ENCODE measurements at regions of chr1 and their contacts with region 1.

Region 1: DNA sequence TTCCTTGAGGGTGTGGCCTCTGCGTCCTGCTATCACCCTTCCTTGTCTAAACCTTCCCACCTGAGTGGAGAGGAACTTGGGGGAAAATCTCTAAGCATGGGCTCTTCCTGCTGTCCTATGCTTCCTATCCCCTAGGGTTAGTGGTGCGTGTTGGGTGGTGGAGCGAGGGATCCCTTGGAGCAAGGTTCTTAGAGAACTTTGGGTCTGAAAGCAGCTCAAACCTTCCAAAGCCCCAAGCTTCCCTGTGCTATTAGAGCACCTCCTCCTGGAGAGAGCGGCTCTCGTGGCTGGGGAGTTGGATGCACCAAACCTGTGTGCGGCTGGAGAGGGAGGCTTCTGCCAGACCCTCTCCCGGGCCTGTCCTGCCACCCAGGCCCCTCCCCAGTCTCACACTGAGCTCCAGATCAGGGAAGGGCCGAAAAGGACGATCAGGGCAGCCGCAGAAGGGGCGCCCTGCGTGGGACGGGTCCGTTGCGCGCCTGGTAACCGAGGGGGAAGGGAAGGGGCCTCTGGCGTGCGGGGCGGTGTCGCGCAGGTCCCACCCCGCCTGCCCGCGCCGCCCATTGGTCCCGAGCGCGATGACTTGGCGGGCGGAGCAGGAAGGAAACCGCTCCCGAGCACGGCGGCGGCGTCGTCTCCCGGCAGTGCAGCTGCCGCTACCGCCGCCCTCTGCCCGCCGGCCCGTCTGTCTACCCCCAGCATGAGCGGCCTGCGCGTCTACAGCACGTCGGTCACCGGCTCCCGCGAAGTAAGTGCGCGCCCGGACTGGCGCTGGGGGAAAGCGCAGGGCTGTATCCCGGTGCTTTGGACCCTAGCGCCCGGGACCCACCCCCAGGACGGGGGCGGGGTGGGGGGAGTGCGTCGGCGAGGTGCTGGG is at the start of gene SH3BGRL3:
- DNase-seq: peak; percentile 80 to 88 (median 85)
- H3K4me3 ChIP-seq: peak within 1 kb of the TSS; percentile 85
- H3K4me3 Mint-ChIP-seq: peak within 1 kb of the TSS; percentile 82 to 97 (median 93)
- H3K27ac ChIP-seq: peak within 1 kb of the TSS; percentile 86
- H3K27ac Mint-ChIP-seq: peak within 1 kb of the TSS; percentile 88 to 99 (median 96)
- H3K4me1 ChIP-seq: peaks cover 86% of the 10 kb centered on the region
- H3K4me1 Mint-ChIP-seq: peaks cover 78 to 87% (median 83%) of the 10 kb centered on the region in 3 donors
- H3K27me3 ChIP-seq: no peaks in the 10 kb centered on the region
- H3K27me3 Mint-ChIP-seq: no peaks in the 10 kb centered on the region
- total RNA-seq, gene SH3BGRL3: 447 to 472 TPM

Region 2: GRCh38 chr1:26161415-26162219 is 118.1 kb before region 1 on chr1:
- CTCF ChIA-PET with region 1: no interaction called
- POLR2A ChIA-PET with region 1: no interaction called
- DNase-seq: peak in 2 of 5 donors; percentile 35 to 57
- H3K4me3 ChIP-seq: peak overlapping the region; percentile 26
- H3K4me3 Mint-ChIP-seq: peak overlapping the region in 3 of 7 donors; percentile 43 to 62 (median 44)
- H3K27ac ChIP-seq: peak overlapping the region; percentile 16
- H3K27ac Mint-ChIP-seq: no peak overlapping the region
- H3K4me1 ChIP-seq: peaks cover 16% of the 10 kb centered on the region
- H3K4me1 Mint-ChIP-seq: peaks cover 11 to 23% (median 13%) of the 10 kb centered on the region in 3 donors
- H3K27me3 ChIP-seq: peaks cover 13% of the 10 kb centered on the region
- H3K27me3 Mint-ChIP-seq: peaks cover 43 to 46% of the 10 kb centered on the region in 2 donors

Region 3: GRCh38 chr1:26254404-26254803 is 25.3 kb before region 1 on chr1:
- CTCF ChIA-PET with region 1: no interaction called
- POLR2A ChIA-PET with region 1: no interaction called
- DNase-seq: no peak
- H3K4me3 ChIP-seq: no peak overlapping the region
- H3K4me3 Mint-ChIP-seq: no peak overlapping the region
- H3K27ac ChIP-seq: no peak overlapping the region
- H3K27ac Mint-ChIP-seq: peak overlapping the region in 1 of 8 donors; percentile 73
- H3K4me1 ChIP-seq: no peaks in the 10 kb centered on the region
- H3K4me1 Mint-ChIP-seq: peaks cover 0 to 7% (median 0%) of the 10 kb centered on the region in 3 donors
- H3K27me3 ChIP-seq: no peaks in the 10 kb centered on the region
- H3K27me3 Mint-ChIP-seq: no peaks in the 10 kb centered on the region

Region 4: GRCh38 chr1:26306290-26307229 is 26.9 kb after region 1 on chr1 and contains the start of gene UBXN11:
- CTCF ChIA-PET with region 1: interaction called, 840 read pairs
- POLR2A ChIA-PET with region 1: interaction called, 6 read pairs
- DNase-seq: peak; percentile 86 to 96 (median 92)
- H3K4me3 ChIP-seq: peak within 1 kb of the TSS; percentile 86
- H3K4me3 Mint-ChIP-seq: peak within 1 kb of the TSS; percentile 86 to 99 (median 97)
- H3K27ac ChIP-seq: peak within 1 kb of the TSS; percentile 77
- H3K27ac Mint-ChIP-seq: peak within 1 kb of the TSS; percentile 85 to 99 (median 98)
- H3K4me1 ChIP-seq: peaks cover 35% of the 10 kb centered on the region
- H3K4me1 Mint-ChIP-seq: peaks cover 26 to 29% (median 29%) of the 10 kb centered on the region in 3 donors
- H3K27me3 ChIP-seq: no peaks in the 10 kb centered on the region
- H3K27me3 Mint-ChIP-seq: no peaks in the 10 kb centered on the region
- total RNA-seq, gene UBXN11: 35.2 to 35.8 TPM

Region 5: DNA sequence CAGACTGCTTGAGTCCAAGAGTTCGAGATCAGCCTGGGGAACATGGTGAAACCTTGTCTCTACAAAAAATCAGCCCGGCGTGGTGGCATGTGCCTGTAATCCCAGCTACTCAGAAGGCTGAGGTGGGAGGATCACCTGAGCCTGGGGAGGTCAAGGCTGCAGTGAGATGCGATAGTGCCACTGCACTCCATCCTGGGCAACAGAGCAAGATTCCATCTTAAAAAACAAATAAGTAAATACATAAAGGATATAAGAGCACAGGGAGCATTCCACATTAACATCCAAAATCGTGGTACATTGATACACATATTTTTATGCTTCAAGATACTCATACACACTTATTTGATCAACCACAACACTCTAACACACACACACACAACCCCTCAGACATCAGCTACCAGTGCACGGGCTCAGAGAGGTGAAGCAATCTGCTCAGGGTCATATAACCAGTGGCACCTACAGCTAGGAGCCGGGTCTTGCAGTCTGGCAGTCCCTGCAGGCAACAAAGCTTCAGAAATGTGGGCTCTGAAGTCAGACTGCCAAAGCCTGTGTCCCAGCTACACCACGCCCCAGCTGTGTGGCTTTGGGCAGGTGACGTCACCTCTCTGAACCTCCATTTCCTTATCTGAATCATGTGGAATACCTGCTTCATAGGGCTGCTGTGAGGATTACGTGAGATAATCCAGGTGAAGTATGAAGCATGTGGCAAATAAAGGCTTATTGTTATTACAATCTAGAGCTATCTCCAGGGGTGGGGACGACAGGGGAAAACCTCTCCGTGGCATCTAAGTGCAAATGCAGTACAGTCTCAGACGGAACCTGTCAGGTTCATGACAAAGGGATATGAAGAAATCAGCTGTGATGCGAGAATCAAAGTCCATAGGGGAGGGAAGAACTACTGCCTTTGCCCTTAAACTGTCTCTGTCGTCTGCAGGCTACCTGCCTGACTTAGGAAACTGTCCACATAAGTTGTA is 79.0 kb after region 1 on chr1:
- CTCF ChIA-PET with region 1: interaction called, 24 read pairs
- POLR2A ChIA-PET with region 1: interaction called, 4 read pairs
- DNase-seq: peak; percentile 61 to 87 (median 75)
- H3K4me3 ChIP-seq: peak overlapping the region; percentile 23
- H3K4me3 Mint-ChIP-seq: peak overlapping the region; percentile 60 to 84 (median 69)
- H3K27ac ChIP-seq: no peak overlapping the region
- H3K27ac Mint-ChIP-seq: peak overlapping the region; percentile 61 to 91 (median 78)
- H3K4me1 ChIP-seq: peaks cover 36% of the 10 kb centered on the region
- H3K4me1 Mint-ChIP-seq: peaks cover 44 to 60% (median 47%) of the 10 kb centered on the region in 3 donors
- H3K27me3 ChIP-seq: peaks cover 14% of the 10 kb centered on the region
- H3K27me3 Mint-ChIP-seq: peaks cover 11 to 21% of the 10 kb centered on the region in 2 donors

Region 6: GRCh38 chr1:26363549-26364448 is 84.1 kb after region 1 on chr1:
- CTCF ChIA-PET with region 1: interaction called, 24 read pairs
- POLR2A ChIA-PET with region 1: interaction called, 4 read pairs
- DNase-seq: peak; percentile 75 to 87 (median 78)
- H3K4me3 ChIP-seq: no peak overlapping the region
- H3K4me3 Mint-ChIP-seq: peak overlapping the region in 5 of 7 donors; percentile 4 to 72 (median 61)
- H3K27ac ChIP-seq: no peak overlapping the region
- H3K27ac Mint-ChIP-seq: peak overlapping the region in 5 of 8 donors; percentile 18 to 59 (median 32)
- H3K4me1 ChIP-seq: peaks cover 46% of the 10 kb centered on the region
- H3K4me1 Mint-ChIP-seq: peaks cover 60 to 84% (median 66%) of the 10 kb centered on the region in 3 donors
- H3K27me3 ChIP-seq: peaks cover 14% of the 10 kb centered on the region
- H3K27me3 Mint-ChIP-seq: peaks cover 11 to 25% of the 10 kb centered on the region in 2 donors

Region 7: GRCh38 chr1:26378088-26378878 is 98.6 kb after region 1 on chr1:
- CTCF ChIA-PET with region 1: interaction called, 72 read pairs
- POLR2A ChIA-PET with region 1: interaction called, 8 read pairs
- DNase-seq: peak; percentile 79 to 95 (median 81)
- H3K4me3 ChIP-seq: peak overlapping the region; percentile 47
- H3K4me3 Mint-ChIP-seq: peak overlapping the region; percentile 46 to 85 (median 75)
- H3K27ac ChIP-seq: peak overlapping the region; percentile 75
- H3K27ac Mint-ChIP-seq: peak overlapping the region; percentile 80 to 97 (median 94)
- H3K4me1 ChIP-seq: peaks cover 70% of the 10 kb centered on the region
- H3K4me1 Mint-ChIP-seq: peaks cover 67 to 79% (median 71%) of the 10 kb centered on the region in 3 donors
- H3K27me3 ChIP-seq: no peaks in the 10 kb centered on the region
- H3K27me3 Mint-ChIP-seq: peaks cover 0 to 3% of the 10 kb centered on the region in 2 donors

Region 8: GRCh38 chr1:26391450-26391849 is 111.8 kb after region 1 on chr1:
- CTCF ChIA-PET with region 1: interaction called, 57 read pairs
- POLR2A ChIA-PET with region 1: no interaction called
- DNase-seq: peak in 4 of 5 donors; percentile 24 to 73 (median 46)
- H3K4me3 ChIP-seq: no peak overlapping the region
- H3K4me3 Mint-ChIP-seq: peak overlapping the region in 3 of 7 donors; percentile 0 to 22 (median 18)
- H3K27ac ChIP-seq: no peak overlapping the region
- H3K27ac Mint-ChIP-seq: peak overlapping the region in 4 of 8 donors; percentile 1 to 15 (median 4)
- H3K4me1 ChIP-seq: peaks cover 10% of the 10 kb centered on the region
- H3K4me1 Mint-ChIP-seq: peaks cover 32 to 45% (median 35%) of the 10 kb centered on the region in 3 donors
- H3K27me3 ChIP-seq: no peaks in the 10 kb centered on the region
- H3K27me3 Mint-ChIP-seq: peaks cover 0 to 9% of the 10 kb centered on the region in 2 donors

Measured in CD8-positive, alpha-beta memory T cell (primary cell).